HepG2 (cell line): ENCODE measurements at regions of chr16 and their contacts with region 1.

Region 1: GRCh38 chr16:83994087-83994486 is 26.0 kb downstream of the NECAB2 start:
- DNase-seq: peak; percentile 75
- ATAC-seq: peak; percentile 10; the same call in 2 of the 3 replicates
- H3K4me3 ChIP-seq: no peak overlapping the region
- H3K27ac ChIP-seq: no peak overlapping the region
- H3K4me1 ChIP-seq: peaks cover 25% of the 10 kb centered on the region
- H3K27me3 ChIP-seq: peaks cover 2 to 22% of the 10 kb centered on the region in 2 experiments; a peak in 4 of 5 replicates
- CTCF ChIP-seq: no peak
- EP300 ChIP-seq: peak in 1 of 2 experiments; percentile 52; a peak in 2 of 4 replicates
- POLR2A ChIP-seq: no peak
- RAD21 ChIP-seq: no peak

Region 2: DNA sequence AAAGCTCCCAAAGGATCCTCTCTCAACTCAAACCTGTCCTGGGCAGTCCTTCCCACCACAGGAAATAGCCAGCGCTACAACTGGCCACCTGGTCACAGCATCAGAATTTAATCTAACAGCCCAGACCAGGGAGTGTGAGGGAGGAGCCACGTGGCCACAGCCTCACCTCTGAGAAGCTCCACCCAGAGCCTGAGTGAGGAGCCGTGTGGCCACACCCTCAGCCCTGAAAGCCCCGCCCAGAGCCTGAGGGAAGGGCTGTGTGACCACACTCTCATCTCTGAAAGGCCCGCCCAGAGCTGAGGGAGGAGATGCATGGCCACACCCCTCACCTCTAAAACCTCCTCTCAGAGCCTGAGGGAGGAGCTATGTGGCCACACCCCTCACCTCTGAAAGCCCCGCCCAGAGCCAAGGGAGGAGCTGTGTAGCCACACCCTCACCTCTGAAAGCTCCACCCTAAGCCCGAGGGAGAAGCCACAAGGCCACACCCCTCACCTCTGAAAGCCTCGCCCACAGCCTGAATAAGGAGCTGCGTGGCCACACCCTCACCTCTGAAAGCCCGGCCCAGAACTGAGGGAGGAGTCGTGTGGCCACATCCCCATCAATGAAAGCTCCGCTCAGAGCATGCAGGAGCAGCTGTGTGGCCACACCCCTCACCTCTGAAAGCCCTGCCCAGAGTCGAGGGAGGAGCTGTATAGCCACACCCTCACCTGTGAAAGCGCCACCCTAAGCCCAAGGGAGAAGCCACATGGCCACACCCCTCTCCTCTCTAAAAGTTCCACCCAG is 19.9 kb after region 1 on chr16:
- CTCF ChIA-PET with region 1: no interaction called
- POLR2A ChIA-PET with region 1: interaction called, 11 read pairs
- in situ Hi-C with region 1: no loop called
- intact Hi-C with region 1: no loop called
- DNase-seq: peak; percentile 94
- ATAC-seq: peak; percentile 92
- H3K4me3 ChIP-seq: peak overlapping the region in 1 of 3 experiments; percentile 6; a peak in 1 of 6 replicates
- H3K27ac ChIP-seq: no peak overlapping the region
- H3K4me1 ChIP-seq: peaks cover 8% of the 10 kb centered on the region; the same call in 1 of the 2 replicates
- H3K27me3 ChIP-seq: peaks cover 0 to 13% of the 10 kb centered on the region in 2 experiments; a peak in 2 of 5 replicates
- CTCF ChIP-seq: peak; percentile 16; the same call in 1 of the 2 replicates
- EP300 ChIP-seq: no peak
- POLR2A ChIP-seq: no peak
- RAD21 ChIP-seq: no peak